A673 (cell line): ENCODE measurements at regions of chr15 and their contacts with region 1.

Region 1: DNA sequence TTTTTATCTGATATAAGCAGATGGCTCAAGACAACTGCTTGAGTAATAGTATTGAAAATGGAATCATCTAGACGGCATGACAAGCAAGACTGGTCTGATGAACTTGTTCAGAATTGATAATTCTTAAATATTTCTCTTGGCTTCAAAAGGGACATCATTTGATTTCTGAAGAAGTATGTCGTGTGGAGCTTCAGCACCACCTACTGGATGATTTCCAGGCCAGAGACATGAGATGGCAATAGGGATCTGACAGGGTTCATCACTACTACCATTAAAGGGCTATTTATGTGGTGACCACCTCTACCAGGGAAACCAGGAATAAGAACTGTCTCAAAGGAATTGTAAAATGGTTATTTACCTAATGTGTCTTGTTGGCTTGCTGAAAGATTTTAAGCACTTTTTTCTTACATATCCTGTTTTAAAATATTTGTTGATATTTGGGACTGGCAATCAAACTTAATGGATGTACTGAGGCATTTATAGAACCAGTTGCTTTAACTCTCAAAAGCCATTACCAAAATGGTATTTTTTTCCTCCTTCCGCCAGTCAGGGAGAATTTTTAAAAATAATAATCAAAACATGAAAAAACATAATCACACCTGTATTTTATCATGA is 99.5 kb upstream of the FAM98B start:
- DNase-seq: peak; percentile 80
- H3K4me3 ChIP-seq: no peak overlapping the region
- H3K27ac ChIP-seq: no peak overlapping the region
- H3K4me1 ChIP-seq: no peaks in the 10 kb centered on the region
- H3K27me3 ChIP-seq: no peaks in the 10 kb centered on the region
- CTCF ChIP-seq: peak; percentile 86

Region 2: DNA sequence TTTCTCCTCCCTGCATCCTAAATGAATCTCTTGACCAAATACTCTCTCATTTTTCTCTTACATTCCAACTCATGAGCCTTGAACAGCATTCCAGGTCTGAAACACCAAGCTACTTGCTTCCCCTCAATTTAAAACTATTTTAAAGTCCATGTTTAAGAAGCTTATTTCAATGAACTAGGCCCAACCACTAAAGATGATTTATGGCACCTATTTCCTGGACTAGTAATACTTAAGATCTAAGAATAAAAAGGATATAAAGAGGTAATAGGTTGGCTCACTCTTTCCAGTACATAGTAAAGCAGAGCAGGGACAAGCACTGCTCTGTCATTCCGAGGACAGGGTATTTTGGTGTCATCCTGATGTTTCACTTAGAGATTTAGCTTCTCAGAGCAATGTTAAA is 639.3 kb before region 1 on chr15:
- CTCF ChIA-PET with region 1: no interaction called
- POLR2A ChIA-PET with region 1: no interaction called
- intact Hi-C with region 1: no loop called
- DNase-seq: peak; percentile 49
- H3K4me3 ChIP-seq: no peak overlapping the region
- H3K27ac ChIP-seq: no peak overlapping the region
- H3K4me1 ChIP-seq: peaks cover 5% of the 10 kb centered on the region
- H3K27me3 ChIP-seq: no peaks in the 10 kb centered on the region
- CTCF ChIP-seq: no peak

Region 3: GRCh38 chr15:37995461-37996347 is 358.7 kb before region 1 on chr15:
- CTCF ChIA-PET with region 1: interaction called, 4 read pairs
- POLR2A ChIA-PET with region 1: no interaction called
- intact Hi-C with region 1: loop called (anchors 2 kb)
- DNase-seq: peak; percentile 69
- H3K4me3 ChIP-seq: no peak overlapping the region
- H3K27ac ChIP-seq: no peak overlapping the region
- H3K4me1 ChIP-seq: no peaks in the 10 kb centered on the region
- H3K27me3 ChIP-seq: peaks cover 10% of the 10 kb centered on the region
- CTCF ChIP-seq: peak; percentile 73

Region 4: GRCh38 chr15:38002883-38003477 is 351.4 kb before region 1 on chr15:
- CTCF ChIA-PET with region 1: no interaction called
- POLR2A ChIA-PET with region 1: no interaction called
- intact Hi-C with region 1: loop called (anchors 1 kb)
- DNase-seq: peak; percentile 80
- H3K4me3 ChIP-seq: no peak overlapping the region
- H3K27ac ChIP-seq: no peak overlapping the region
- H3K4me1 ChIP-seq: no peaks in the 10 kb centered on the region
- H3K27me3 ChIP-seq: no peaks in the 10 kb centered on the region
- CTCF ChIP-seq: peak; percentile 68

Region 5: DNA sequence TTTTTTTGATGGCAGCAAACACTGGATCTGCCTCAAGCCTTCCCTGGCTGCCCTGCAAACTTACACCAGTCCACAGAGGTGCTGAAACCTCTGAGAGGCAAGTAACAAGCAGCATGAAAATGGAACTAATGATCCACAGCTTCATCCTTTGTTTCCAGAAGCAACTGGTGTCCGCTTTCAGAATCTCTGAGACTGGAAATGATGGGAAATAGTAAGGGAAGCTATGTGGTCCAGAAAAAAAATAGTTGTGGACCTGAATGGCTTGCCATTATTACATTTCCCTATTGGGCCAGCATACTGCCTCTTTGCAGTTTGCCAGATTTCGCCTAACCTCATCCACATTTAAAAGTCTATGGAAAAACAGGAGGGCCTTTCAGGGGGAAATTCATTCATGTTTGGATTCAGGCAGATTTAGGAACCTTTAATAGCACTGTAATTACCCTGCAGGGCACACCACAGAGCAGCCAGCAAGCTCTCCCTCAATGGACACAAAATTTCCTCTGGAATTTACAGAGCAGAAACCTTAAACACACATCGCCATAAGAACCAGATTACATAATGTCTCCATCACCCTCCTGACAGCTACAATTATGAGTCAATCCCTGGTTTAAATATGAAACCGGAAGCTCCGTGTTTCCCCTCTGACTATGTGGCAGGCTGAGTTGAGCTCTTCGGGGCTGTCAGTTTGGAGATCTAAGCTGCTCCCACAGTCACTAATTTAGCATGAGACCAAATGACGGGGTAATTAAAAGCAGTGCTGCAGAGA is 285.6 kb before region 1 on chr15:
- CTCF ChIA-PET with region 1: no interaction called
- POLR2A ChIA-PET with region 1: no interaction called
- intact Hi-C with region 1: loop called (anchors 5 kb)
- DNase-seq: peak; percentile 95
- H3K4me3 ChIP-seq: peak overlapping the region; percentile 12
- H3K27ac ChIP-seq: peak overlapping the region; percentile 57
- H3K4me1 ChIP-seq: peaks cover 24% of the 10 kb centered on the region
- H3K27me3 ChIP-seq: no peaks in the 10 kb centered on the region
- CTCF ChIP-seq: no peak

Region 6: DNA sequence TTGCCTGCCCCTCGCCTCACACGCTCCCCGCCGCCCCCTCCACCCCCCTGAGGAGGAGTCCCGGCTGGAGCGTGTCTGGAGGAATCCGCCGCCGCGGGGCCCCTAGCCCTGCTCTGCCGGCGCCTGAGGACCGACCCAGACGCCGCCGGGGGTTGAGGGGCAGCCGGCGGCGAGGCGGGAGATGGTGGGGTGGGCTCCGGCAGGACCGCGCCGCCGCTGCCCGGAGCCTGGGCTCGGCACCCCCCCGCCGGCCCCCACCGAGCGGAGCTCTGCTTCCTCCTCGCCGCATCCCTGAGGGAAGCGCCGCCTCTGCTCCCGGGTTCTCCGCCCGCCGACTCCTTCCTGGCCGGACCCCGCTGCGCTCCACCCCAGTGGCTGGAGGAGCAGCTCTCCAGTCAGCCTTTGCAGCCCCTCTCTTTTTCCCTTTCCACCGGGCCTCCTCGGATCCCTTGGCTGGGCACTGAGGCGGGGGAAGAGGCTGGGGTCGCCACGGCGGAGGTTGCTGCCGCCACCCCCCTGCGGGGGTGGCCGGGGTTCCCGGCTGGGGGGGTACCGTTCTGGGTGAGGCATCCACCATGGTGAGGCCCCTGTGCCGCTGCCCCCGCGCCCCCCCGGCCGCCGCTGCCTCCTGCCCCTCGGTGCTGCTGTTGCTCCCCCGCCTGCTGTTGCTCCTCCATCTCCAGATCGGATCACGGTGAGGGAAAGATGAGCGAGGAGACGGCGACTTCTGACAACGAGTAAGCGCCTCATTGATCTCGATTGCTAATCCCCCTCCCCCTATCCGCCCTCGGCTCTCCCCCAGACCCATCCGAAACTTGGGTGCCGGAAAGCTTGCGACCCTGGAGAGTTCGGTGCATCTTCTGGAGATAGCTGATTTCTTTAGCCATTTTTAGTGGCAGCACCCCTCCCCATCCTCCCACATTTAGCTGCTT is 101.7 kb before region 1 on chr15 and contains the start of gene SPRED1:
- CTCF ChIA-PET with region 1: no interaction called
- POLR2A ChIA-PET with region 1: no interaction called
- intact Hi-C with region 1: loop called (anchors 5 kb)
- DNase-seq: peak; percentile 81
- H3K4me3 ChIP-seq: peak within 1 kb of the TSS; percentile 91
- H3K27ac ChIP-seq: peak within 1 kb of the TSS; percentile 98
- H3K4me1 ChIP-seq: peaks cover 34% of the 10 kb centered on the region
- H3K27me3 ChIP-seq: peaks cover 6% of the 10 kb centered on the region
- CTCF ChIP-seq: no peak
- total RNA-seq, gene SPRED1: 14.2 and 17.3 TPM in 2 replicates

Region 7: GRCh38 chr15:38316311-38316710 is 38.1 kb before region 1 on chr15:
- CTCF ChIA-PET with region 1: no interaction called
- POLR2A ChIA-PET with region 1: no interaction called
- intact Hi-C with region 1: loop called (anchors 1 kb)
- DNase-seq: no peak
- H3K4me3 ChIP-seq: no peak overlapping the region
- H3K27ac ChIP-seq: no peak overlapping the region
- H3K4me1 ChIP-seq: peaks cover 11% of the 10 kb centered on the region
- H3K27me3 ChIP-seq: no peaks in the 10 kb centered on the region
- CTCF ChIP-seq: no peak